PC-9 (cell line): ENCODE measurements at regions of chr6 and their contacts with region 1.

Region 1: DNA sequence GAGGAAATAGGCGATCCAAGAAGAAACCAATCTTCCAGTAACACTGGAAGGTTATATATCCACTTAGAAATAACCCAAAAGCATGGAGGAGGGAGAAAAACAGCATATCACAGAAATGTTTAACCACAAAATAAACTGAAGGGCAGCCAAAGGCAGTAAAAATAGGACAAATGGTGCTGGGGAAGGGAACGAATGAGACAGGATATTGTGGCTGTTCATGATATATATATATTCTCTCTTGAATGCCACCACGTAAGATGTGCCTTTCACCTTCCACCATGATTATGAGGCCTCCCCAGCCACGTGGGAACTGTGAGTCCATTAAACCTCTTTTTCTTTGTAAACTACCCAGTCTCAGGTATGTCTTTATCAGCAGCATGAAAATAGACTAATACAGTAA is 162.4 kb downstream of the TBC1D32 start:
- DNase-seq: no peak
- H3K4me3 ChIP-seq: no peak overlapping the region
- H3K27ac ChIP-seq: no peak overlapping the region
- H3K4me1 ChIP-seq: no peaks in the 10 kb centered on the region
- H3K27me3 ChIP-seq: no peaks in the 10 kb centered on the region
- CTCF ChIP-seq: no peak

Region 2: DNA sequence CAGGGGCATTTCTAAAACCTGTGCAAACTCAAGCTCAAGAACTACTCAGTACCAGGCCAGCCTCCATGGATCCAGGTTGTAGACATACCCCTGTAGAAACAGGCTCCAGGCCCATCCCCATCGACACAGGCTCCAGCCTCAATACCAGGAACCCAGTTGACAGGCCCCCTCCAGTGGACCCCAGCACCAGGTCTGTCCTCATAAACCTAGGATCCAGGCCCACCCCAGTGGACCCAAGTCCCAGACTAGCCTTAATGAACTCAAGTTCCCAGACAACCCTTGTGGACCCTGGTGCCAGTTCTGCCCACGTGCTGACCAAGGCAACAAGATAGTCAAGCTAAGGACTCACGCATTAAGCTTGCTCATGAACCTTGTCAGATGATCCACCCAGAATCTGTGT is 314.5 kb before region 1 on chr6:
- CTCF ChIA-PET with region 1: no interaction called
- POLR2A ChIA-PET with region 1: no interaction called
- intact Hi-C with region 1: no loop called
- DNase-seq: no peak
- H3K4me3 ChIP-seq: no peak overlapping the region
- H3K27ac ChIP-seq: no peak overlapping the region
- H3K4me1 ChIP-seq: no peaks in the 10 kb centered on the region
- H3K27me3 ChIP-seq: no peaks in the 10 kb centered on the region
- CTCF ChIP-seq: no peak

Region 3: GRCh38 chr6:121143476-121143875 is 28.4 kb before region 1 on chr6:
- CTCF ChIA-PET with region 1: no interaction called
- POLR2A ChIA-PET with region 1: no interaction called
- intact Hi-C with region 1: no loop called
- DNase-seq: peak in 1 of 2 experiments; percentile 48
- H3K4me3 ChIP-seq: no peak overlapping the region
- H3K27ac ChIP-seq: no peak overlapping the region
- H3K4me1 ChIP-seq: peaks cover 9% of the 10 kb centered on the region
- H3K27me3 ChIP-seq: no peaks in the 10 kb centered on the region
- CTCF ChIP-seq: no peak

Region 4: DNA sequence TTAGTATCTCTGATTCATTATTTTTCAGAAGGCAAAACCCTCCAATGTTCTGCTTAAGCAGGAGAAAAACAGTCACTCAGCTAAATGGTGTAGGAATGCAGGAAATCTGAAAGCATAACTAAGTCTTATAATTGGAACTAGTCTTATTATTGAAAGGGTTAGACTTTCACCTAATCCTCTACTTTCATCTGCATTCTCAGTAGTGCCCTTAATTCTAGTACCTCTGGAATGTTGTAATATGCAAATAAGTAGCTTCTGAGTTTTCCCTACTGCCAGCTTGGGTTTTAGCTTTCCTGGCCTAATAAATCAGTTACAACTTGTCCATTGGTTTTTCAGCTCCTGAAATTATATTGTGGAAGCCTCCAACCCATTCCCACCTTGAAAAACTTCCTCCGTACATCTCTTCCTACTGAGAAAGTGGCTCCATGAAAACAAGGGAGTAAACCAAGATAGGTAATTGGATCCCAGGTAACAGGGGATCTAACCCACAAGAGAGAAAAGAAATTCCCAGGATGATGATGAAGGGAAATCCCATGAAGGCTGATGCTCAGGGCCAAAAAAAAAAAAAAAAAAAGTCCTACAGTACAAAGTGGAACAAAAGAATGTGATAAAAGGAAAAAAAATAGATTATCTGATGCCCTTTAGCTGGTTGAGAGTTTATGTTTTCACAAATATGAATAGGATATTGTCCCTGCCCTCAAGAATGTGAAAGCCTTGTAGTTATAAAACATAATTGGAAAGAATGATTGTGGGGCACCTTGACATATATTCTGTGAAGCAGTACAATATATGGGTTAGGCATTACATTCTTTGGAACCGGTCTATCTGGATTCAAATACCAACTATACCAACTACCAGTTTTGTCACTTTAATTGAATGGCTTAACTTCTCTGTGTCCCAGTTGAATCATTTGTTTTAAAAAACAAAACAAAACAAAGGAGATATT is 15.6 kb after region 1 on chr6:
- CTCF ChIA-PET with region 1: no interaction called
- POLR2A ChIA-PET with region 1: no interaction called
- intact Hi-C with region 1: no loop called
- DNase-seq: peak in 1 of 2 experiments; percentile 97
- H3K4me3 ChIP-seq: no peak overlapping the region
- H3K27ac ChIP-seq: peak overlapping the region; percentile 58
- H3K4me1 ChIP-seq: peaks cover 33% of the 10 kb centered on the region
- H3K27me3 ChIP-seq: no peaks in the 10 kb centered on the region
- CTCF ChIP-seq: no peak

Region 5: GRCh38 chr6:121201105-121201504 is 29.2 kb after region 1 on chr6:
- CTCF ChIA-PET with region 1: no interaction called
- POLR2A ChIA-PET with region 1: interaction called, 10 read pairs
- intact Hi-C with region 1: no loop called
- DNase-seq: peak in 1 of 2 experiments; percentile 57
- H3K4me3 ChIP-seq: no peak overlapping the region
- H3K27ac ChIP-seq: no peak overlapping the region
- H3K4me1 ChIP-seq: peaks cover 7% of the 10 kb centered on the region
- H3K27me3 ChIP-seq: no peaks in the 10 kb centered on the region
- CTCF ChIP-seq: no peak